Activated B cell treated with CpG ODN at 0.5 μM for 24 hours (primary cell): ENCODE measurements at regions of chr1 and their contacts with region 1.

Region 1: DNA sequence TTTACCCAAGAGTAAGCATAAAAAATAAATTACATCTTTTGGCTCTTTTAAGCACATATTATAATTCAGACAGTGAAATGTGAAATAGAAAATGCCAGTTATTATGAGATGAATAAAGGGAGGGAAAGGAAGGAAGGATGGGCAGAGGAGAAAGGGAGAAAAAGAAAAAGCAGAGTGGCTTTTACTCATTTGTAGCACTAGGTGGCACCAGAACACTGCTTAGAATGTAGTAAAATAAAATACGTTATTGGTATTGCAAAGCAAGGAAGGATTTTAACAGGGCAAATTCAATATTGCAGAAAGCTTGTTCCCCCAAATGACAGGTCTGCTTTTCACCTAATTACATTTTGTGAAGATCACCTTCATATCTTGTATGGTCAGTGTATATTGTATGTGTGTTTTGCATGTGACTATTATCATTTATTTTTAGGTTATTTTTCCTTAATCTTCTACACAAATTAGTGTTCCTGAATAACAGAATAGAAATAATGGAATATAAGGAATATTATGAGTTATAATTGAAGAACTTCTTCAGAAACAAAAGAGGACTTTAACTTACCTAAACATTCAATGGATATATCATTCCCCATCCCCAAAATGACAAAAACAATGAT is 9.1 kb upstream of the PCNX2 start:
- DNase-seq: no peak
- ATAC-seq: peak; percentile 40
- H3K4me3 Mint-ChIP-seq: no peak overlapping the region
- H3K27ac Mint-ChIP-seq: no peak overlapping the region
- H3K4me1 Mint-ChIP-seq: peaks cover 11% of the 10 kb centered on the region
- H3K27me3 Mint-ChIP-seq: peaks cover 24% of the 10 kb centered on the region
- CTCF ChIP-seq: peak; percentile 80

Region 2: GRCh38 chr1:233151861-233152260 is 152.7 kb before region 1 on chr1:
- CTCF ChIA-PET with region 1: no interaction called
- POLR2A ChIA-PET with region 1: no interaction called
- intact Hi-C with region 1: no loop called
- DNase-seq: no peak
- ATAC-seq: no peak
- H3K4me3 Mint-ChIP-seq: no peak overlapping the region
- H3K27ac Mint-ChIP-seq: no peak overlapping the region
- H3K4me1 Mint-ChIP-seq: no peaks in the 10 kb centered on the region
- H3K27me3 Mint-ChIP-seq: no peaks in the 10 kb centered on the region
- CTCF ChIP-seq: no peak

Region 3: DNA sequence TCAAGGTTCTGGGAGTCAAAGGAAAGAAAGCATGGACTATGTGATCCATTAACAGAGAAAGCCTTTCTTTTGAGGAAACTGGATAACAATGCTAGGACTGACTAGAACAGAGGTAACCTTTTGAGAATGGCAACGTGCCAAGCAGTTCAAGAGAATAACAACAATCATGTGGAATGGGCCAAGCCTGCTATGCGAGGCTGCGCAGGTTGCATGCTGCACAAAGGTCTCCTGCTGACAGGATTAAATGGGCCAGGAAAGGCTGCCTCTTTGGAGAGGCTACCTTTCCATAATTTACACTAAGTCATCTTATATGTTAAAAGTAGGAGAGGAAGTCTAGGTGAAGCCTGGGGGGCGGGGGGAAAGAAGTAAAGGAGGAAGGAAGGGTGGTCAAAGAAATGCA is 14.9 kb before region 1 on chr1:
- CTCF ChIA-PET with region 1: interaction called, 5 read pairs
- POLR2A ChIA-PET with region 1: no interaction called
- intact Hi-C with region 1: loop called (anchors 2 kb)
- DNase-seq: no peak
- ATAC-seq: no peak
- H3K4me3 Mint-ChIP-seq: no peak overlapping the region
- H3K27ac Mint-ChIP-seq: no peak overlapping the region
- H3K4me1 Mint-ChIP-seq: peaks cover 6% of the 10 kb centered on the region
- H3K27me3 Mint-ChIP-seq: no peaks in the 10 kb centered on the region
- CTCF ChIP-seq: no peak

Region 4: DNA sequence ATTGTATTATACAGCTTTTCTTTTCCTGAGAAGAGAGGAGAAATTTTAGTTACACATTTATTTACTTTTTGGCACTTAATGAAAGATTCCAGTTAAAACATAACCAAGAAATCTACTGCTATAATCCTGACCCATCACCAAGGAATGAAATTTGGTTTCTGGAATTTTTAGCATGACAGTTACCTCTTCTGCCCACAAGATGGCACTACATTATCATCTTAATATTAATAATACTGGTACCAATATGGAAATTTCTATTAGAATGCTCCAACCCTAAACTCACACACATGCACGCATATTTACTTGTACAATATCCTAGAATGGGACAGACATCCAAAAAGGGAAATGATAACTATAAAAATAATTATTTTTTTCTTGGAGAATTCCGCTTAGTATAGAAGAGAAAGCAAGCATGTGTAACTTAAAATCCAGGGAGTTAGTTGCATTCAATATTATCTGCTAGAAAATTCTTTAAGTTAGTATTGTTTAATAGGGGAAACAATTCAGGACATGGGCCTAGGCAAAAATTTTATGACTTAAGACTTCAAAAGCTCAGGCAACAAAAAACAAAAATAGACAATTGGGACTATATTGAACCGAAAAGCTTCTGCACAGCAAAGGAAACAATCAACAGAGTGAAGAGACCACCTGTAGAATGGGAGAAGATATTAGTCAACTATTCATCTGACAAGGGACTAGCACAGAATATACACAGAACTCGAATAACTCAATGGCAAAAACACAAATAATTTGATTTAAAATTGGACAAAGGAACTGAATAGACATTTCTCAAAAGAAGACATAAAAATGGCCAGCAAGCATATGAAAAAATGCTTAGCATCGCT is 60.3 kb after region 1 on chr1:
- CTCF ChIA-PET with region 1: interaction called, 7 read pairs
- POLR2A ChIA-PET with region 1: no interaction called
- intact Hi-C with region 1: loop called (anchors 1 kb)
- DNase-seq: no peak
- ATAC-seq: peak; percentile 25
- H3K4me3 Mint-ChIP-seq: no peak overlapping the region
- H3K27ac Mint-ChIP-seq: no peak overlapping the region
- H3K4me1 Mint-ChIP-seq: no peaks in the 10 kb centered on the region
- H3K27me3 Mint-ChIP-seq: no peaks in the 10 kb centered on the region
- CTCF ChIP-seq: peak; percentile 23

Region 5: GRCh38 chr1:233790662-233791375 is 486.2 kb after region 1 on chr1:
- CTCF ChIA-PET with region 1: interaction called, 19 read pairs
- POLR2A ChIA-PET with region 1: no interaction called
- intact Hi-C with region 1: loop called (anchors 1 kb)
- DNase-seq: no peak
- ATAC-seq: peak; percentile 47
- H3K4me3 Mint-ChIP-seq: no peak overlapping the region
- H3K27ac Mint-ChIP-seq: no peak overlapping the region
- H3K4me1 Mint-ChIP-seq: no peaks in the 10 kb centered on the region
- H3K27me3 Mint-ChIP-seq: peaks cover 5% of the 10 kb centered on the region
- CTCF ChIP-seq: peak; percentile 88

Region 6: DNA sequence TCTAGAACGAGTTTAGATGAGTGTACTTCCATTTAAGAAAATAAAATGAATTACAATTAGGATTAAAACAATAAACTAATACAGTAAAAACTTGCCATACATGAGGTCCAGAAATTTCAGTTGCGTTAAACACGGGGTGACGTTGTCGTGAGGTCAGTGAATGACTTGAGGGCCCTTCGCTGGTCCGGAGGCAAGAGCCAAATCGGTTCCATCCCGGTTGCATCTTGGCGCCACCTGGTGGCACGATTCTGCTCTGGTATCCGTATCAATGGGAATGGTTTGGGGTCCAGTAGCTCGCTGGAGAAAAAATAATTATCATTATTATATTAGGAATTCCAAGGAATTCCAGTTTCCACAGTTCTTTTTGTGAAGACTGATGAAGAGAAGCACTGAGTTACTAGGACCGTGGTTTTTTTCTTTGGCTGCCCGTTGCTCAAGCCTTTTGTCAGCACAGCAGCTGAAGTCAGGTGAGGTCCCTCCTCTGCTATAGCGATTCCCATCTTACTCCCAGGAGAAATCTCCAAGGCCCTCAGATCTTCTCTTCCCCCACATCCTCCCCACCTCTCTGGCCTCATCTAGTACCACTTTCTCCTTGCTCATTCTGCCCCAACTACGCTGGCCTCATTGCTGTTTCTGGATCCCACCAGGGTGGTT is 761.3 kb after region 1 on chr1:
- CTCF ChIA-PET with region 1: interaction called, 43 read pairs
- POLR2A ChIA-PET with region 1: no interaction called
- intact Hi-C with region 1: loop called (anchors 1 kb)
- DNase-seq: peak; percentile 42
- ATAC-seq: no peak
- H3K4me3 Mint-ChIP-seq: no peak overlapping the region
- H3K27ac Mint-ChIP-seq: no peak overlapping the region
- H3K4me1 Mint-ChIP-seq: no peaks in the 10 kb centered on the region
- H3K27me3 Mint-ChIP-seq: peaks cover 8% of the 10 kb centered on the region
- CTCF ChIP-seq: no peak

Region 7: GRCh38 chr1:234309598-234310459 is 1005.2 kb after region 1 on chr1:
- CTCF ChIA-PET with region 1: no interaction called
- POLR2A ChIA-PET with region 1: no interaction called
- intact Hi-C with region 1: loop called (anchors 5 kb)
- DNase-seq: peak; percentile 32
- ATAC-seq: peak; percentile 87
- H3K4me3 Mint-ChIP-seq: peak overlapping the region; percentile 2
- H3K27ac Mint-ChIP-seq: no peak overlapping the region
- H3K4me1 Mint-ChIP-seq: peaks cover 7% of the 10 kb centered on the region
- H3K27me3 Mint-ChIP-seq: peaks cover 14% of the 10 kb centered on the region
- CTCF ChIP-seq: peak; percentile 78